Activated B cell treated with CpG ODN at 0.5 μM for 24 hours (primary cell): ENCODE measurements at regions of chr19 and their contacts with region 1.

Region 1: DNA sequence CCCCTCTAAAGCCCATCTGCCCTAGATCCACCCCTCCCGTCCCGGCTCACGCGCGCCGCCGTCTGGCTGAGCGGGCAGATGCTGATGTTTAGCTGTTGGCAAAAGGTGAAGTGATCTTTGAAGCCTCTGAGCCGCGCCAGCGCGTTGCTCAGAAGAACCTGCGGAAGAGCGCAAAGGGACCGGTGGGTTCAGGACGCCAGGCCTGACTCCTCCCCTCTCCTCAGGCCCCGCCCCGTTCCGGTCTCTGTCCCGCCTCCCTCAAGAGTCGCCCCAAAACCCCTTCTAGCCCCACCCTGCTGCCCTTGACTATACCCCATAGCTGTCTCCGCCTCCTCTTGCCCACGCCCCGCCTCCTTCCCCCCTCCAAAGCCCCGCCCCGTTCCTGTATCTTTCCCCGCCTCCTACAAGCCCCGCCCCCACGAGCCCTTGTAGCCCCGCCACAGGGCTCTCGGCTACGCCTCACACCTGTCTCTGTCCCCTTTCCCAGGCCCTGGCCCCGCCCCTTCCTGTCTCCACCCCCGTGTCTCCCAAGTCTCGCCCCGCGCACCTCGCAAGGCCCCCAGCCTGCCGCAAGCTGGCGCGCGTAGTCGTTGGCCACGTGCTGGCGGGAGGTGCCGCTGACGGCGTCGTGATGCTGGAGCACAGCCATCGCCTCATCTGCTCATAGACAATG is 9.5 kb downstream of the MAN2B1 start:
- DNase-seq: no peak
- ATAC-seq: peak; percentile 54
- H3K4me3 Mint-ChIP-seq: no peak overlapping the region
- H3K27ac Mint-ChIP-seq: no peak overlapping the region
- H3K4me1 Mint-ChIP-seq: peaks cover 2% of the 10 kb centered on the region
- H3K27me3 Mint-ChIP-seq: no peaks in the 10 kb centered on the region
- CTCF ChIP-seq: no peak

Region 2: GRCh38 chr19:11155373-11156120 is 1501.5 kb before region 1 on chr19 and contains the start of gene SPC24:
- CTCF ChIA-PET with region 1: no interaction called
- POLR2A ChIA-PET with region 1: interaction called, 11 read pairs
- intact Hi-C with region 1: no loop called
- DNase-seq: peak; percentile 78
- ATAC-seq: peak; percentile 99
- H3K4me3 Mint-ChIP-seq: peak within 1 kb of the TSS; percentile 82
- H3K27ac Mint-ChIP-seq: peak within 1 kb of the TSS; percentile 73
- H3K4me1 Mint-ChIP-seq: peaks cover 11% of the 10 kb centered on the region
- H3K27me3 Mint-ChIP-seq: no peaks in the 10 kb centered on the region
- CTCF ChIP-seq: no peak
- total RNA-seq, gene SPC24: 0.98 and 1.3 TPM in 2 replicates

Region 3: DNA sequence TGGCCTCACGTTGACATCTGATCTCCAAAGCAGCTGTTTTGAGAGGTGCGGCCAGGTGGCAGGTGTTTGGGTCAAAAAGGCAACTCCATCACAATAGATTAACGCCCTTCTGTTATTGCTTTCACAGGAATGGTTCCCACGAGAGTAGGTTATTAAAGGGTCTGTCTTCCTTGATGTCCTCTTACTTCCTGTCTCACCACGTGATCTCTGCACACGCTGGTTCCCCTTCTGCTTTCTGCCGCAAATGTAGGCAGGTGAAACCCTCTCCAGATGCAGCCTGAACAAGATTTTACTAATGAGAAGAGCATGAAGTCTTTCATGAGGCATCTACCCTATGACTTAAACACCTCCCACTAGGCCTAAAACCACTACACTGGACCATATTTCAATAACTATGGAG is 83.0 kb before region 1 on chr19:
- CTCF ChIA-PET with region 1: no interaction called
- POLR2A ChIA-PET with region 1: interaction called, 21 read pairs
- intact Hi-C with region 1: no loop called
- DNase-seq: peak; percentile 27
- ATAC-seq: peak; percentile 95
- H3K4me3 Mint-ChIP-seq: peak overlapping the region; percentile 44
- H3K27ac Mint-ChIP-seq: peak overlapping the region; percentile 86
- H3K4me1 Mint-ChIP-seq: peaks cover 42% of the 10 kb centered on the region
- H3K27me3 Mint-ChIP-seq: no peaks in the 10 kb centered on the region
- CTCF ChIP-seq: no peak